ENCODE measurements at regions of chr4 and their contacts with region 1.

Region 1: GRCh38 chr4:109998867-109999584 is 86.3 kb downstream of the EGF start:
- DNase-seq: peak; percentile 86
- H3K4me3 Mint-ChIP-seq: no peak overlapping the region
- H3K27ac Mint-ChIP-seq: no peak overlapping the region
- H3K4me1 Mint-ChIP-seq: peaks cover 22% of the 10 kb centered on the region
- H3K27me3 Mint-ChIP-seq: peaks cover 5% of the 10 kb centered on the region

Region 2: GRCh38 chr4:110310795-110311194 is 311.8 kb after region 1 on chr4:
- intact Hi-C with region 1: loop called (anchors 2 kb)
- DNase-seq: no peak
- H3K4me3 Mint-ChIP-seq: no peak overlapping the region
- H3K27ac Mint-ChIP-seq: no peak overlapping the region
- H3K4me1 Mint-ChIP-seq: no peaks in the 10 kb centered on the region
- H3K27me3 Mint-ChIP-seq: peaks cover 23% of the 10 kb centered on the region

Region 3: DNA sequence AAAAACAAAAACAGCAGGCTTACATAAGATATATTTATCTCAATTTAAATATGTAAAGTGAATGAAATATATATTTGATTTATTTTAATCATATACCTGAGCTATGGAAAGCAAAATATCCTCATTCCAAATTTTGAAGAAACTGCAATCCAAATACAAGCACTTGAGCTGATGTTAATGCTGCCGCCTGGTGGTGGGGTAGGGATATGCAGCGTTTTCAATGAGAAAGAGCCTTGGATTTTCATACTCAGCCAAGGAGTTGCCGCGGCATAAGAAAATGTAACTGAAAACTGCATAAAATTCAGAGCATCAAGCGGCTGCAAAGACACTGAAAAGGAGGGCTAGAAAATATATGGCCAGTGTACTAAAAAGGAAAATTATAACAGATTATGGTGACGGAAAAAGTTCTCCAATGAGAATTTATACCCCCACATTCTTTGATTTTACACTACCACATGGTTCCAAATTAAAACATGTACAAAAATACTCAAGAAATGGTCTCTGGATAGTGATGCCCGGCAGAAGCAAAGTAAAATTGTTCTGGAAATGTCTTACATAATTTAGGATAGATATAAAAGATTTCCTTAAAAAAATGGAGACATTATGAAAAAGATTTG is 1284.1 kb after region 1 on chr4:
- intact Hi-C with region 1: loop called (anchors 2 kb)
- DNase-seq: peak; percentile 80
- H3K4me3 Mint-ChIP-seq: no peak overlapping the region
- H3K27ac Mint-ChIP-seq: no peak overlapping the region
- H3K4me1 Mint-ChIP-seq: no peaks in the 10 kb centered on the region
- H3K27me3 Mint-ChIP-seq: no peaks in the 10 kb centered on the region

Measured in activated CD4-positive, alpha-beta T cell treated with anti-CD3 and anti-CD28 coated beads, Interleukin-2, amount 10 ng/mL, durations not matched to agents 24 days and 14 days (primary cell).